Activated T-helper 1 cell treated with anti-CD3 and anti-CD28 coated beads, Interleukin-12 subunit alpha, Interleukin-12 subunit beta, Interleukin-2, Interleukin-4 antibody, amounts not matched to agents 30 ng/mL and 10 ng/mL and 1 ng/mL, durations not matched to agents 14 hours and 24 hours and 36 hours (primary cell): ENCODE measurements at regions of chr15 and their contacts with region 1.

Region 1: DNA sequence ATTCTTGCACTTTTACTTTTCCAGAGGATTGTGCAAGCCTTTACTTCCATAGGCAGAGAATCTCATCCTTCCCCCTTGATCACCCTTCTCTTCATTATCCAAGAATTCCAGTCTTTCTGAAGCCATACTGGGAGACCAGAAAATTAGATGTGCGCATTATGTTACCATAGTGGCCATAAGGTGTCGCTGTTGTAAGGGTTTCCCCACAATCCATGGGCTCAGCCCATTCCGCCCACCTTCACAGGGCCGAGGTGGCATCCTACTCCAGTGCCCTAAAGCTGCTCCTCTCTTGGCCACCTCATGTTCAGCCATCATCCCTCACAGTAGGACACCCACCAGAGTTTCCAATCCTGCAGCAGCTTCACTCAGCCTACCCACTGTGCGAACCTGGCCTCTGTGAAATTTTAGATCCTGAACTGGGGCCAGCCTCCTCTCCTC is 35.0 kb downstream of the CTSH start:
- DNase-seq: no peak
- H3K4me3 Mint-ChIP-seq: no peak overlapping the region
- H3K27ac Mint-ChIP-seq: no peak overlapping the region
- H3K4me1 Mint-ChIP-seq: peaks cover 31% of the 10 kb centered on the region
- H3K27me3 Mint-ChIP-seq: no peaks in the 10 kb centered on the region

Region 2: DNA sequence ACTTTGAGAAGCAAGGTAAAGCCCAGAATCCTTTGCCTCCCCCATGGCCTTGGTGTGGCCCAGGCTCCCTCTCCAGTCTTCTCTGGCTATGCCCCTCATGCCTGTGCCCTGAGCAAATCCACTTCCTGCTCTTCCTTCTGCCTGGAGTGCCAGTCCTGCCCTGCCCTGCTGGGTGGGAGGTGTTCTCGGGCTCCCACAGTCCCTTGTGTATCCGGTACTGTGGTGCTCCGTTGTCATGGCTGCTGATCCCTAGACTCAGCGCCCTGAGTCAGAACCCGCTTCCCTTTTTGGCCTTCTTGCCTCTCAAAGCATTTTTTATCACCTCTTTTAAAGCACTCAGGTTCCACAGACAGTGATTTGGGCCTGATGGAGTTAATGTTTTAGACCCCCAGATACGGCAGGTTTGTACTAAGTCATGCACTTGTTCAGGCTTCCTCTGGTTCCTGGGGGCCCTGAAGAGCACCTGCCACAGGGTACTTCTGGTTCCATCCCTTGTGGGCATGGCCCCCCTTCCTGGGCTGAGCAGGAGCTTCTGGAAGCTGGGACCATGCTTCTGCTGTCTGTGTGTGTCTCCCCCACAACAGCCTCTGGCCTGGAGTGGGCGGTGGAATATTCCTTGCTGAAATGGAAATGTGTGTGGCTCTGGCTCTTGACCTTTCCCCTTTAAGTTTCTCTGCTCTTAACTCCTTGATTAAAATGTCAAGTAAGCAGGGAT is 69.0 kb before region 1 on chr15:
- intact Hi-C with region 1: no loop called
- DNase-seq: no peak
- H3K4me3 Mint-ChIP-seq: no peak overlapping the region
- H3K27ac Mint-ChIP-seq: peak overlapping the region; percentile 26
- H3K4me1 Mint-ChIP-seq: peaks cover 5% of the 10 kb centered on the region
- H3K27me3 Mint-ChIP-seq: peaks cover 5% of the 10 kb centered on the region

Region 3: DNA sequence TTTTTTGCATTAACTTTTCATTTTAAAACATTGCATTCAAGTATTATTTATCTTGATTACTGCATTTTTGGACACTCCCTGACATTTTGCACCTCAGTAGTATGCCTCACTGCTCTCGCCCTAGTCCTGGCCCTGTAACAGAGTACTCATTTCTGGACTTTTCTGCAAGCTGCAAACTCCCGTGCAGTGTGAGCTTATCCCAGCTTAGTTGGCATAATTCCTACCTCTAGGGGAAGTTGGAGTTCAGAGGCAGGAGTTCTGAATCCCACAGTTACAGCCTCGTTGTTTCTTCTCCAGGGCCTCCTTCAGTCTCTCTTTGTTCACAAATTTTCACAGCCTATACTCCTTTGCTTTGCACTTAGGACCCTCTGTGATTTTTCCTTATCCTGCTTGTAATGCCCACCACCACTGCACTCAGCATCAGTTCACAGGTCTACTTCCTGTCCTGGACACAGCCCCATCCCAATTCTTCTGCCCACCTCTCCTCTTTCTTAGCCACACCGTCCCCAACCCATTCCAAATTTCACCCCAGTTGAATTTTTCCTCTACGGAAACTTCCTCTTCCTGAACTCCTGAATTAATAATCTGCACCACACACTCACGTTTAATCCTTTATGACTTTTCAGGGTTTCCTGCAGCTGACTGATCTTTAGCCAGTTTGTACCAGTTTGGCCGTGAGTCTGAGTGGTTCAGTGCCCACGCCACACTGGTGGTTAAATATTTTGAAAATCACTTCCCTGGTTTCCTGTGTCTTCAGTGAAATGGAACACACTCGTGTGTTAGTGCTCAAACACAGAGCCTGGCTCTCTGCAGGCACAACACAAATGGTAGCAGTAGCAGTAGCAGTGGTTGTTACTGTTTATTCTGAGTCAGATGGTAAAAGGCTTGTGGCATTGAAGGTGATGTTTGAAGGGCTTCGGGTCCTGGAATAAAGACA is 41.4 kb after region 1 on chr15:
- intact Hi-C with region 1: no loop called
- DNase-seq: no peak
- H3K4me3 Mint-ChIP-seq: no peak overlapping the region
- H3K27ac Mint-ChIP-seq: no peak overlapping the region
- H3K4me1 Mint-ChIP-seq: peaks cover 9% of the 10 kb centered on the region
- H3K27me3 Mint-ChIP-seq: peaks cover 20% of the 10 kb centered on the region

Region 4: DNA sequence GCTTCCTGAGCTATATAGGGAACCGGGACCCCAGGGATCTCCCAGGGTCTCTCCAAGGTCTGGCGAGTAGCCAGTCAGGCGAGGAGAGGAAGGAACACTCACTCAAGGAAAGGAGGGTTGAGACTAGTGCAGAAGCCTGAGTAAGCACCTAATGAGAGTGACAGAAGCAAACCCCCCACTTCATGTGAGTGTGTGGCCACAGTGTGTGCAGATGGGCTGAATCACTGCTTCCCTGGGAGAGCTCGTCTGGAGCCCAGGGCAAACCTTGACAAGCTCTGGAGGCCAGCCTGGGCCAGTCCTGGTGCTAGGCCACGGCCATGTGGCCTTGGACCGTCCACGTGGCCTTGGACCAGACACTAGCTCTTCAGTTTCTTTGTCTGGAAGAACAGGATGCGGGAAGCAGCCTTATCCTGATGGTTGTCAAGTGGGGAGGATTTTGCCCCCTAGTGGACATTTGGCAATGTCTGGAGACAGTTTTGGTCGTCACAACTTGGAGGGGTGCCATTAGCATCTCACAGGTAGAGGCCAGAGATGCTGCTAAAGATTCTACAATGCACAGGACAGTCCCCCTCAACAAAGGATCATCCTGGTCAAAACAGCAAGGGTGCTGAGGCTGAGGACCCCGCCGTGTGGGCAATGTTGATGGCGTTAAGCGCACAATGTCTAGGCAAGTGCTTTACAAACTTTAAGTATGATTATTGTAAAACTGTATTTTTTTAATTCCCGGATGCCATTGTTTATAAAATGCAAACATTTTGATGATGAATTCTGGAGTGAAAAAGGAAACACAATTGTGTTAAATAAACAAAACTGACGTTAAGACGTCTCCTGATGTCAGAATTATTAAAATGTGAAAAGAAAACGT is 69.9 kb after region 1 on chr15:
- intact Hi-C with region 1: loop called (anchors 2 kb)
- DNase-seq: no peak
- H3K4me3 Mint-ChIP-seq: no peak overlapping the region
- H3K27ac Mint-ChIP-seq: no peak overlapping the region
- H3K4me1 Mint-ChIP-seq: peaks cover 13% of the 10 kb centered on the region
- H3K27me3 Mint-ChIP-seq: peaks cover 5% of the 10 kb centered on the region

Region 5: GRCh38 chr15:79007066-79007465 is 97.3 kb after region 1 on chr15:
- intact Hi-C with region 1: loop called (anchors 5 kb)
- DNase-seq: no peak
- H3K4me3 Mint-ChIP-seq: no peak overlapping the region
- H3K27ac Mint-ChIP-seq: no peak overlapping the region
- H3K4me1 Mint-ChIP-seq: peaks cover 18% of the 10 kb centered on the region
- H3K27me3 Mint-ChIP-seq: peaks cover 4% of the 10 kb centered on the region

Region 6: GRCh38 chr15:79184465-79184892 is 274.7 kb after region 1 on chr15:
- intact Hi-C with region 1: loop called (anchors 1 kb)
- DNase-seq: peak; percentile 39
- H3K4me3 Mint-ChIP-seq: no peak overlapping the region
- H3K27ac Mint-ChIP-seq: no peak overlapping the region
- H3K4me1 Mint-ChIP-seq: no peaks in the 10 kb centered on the region
- H3K27me3 Mint-ChIP-seq: peaks cover 8% of the 10 kb centered on the region